Endothelial cell of umbilical vein (primary cell): ENCODE measurements at regions of chr1 and their contacts with region 1.

Region 1: DNA sequence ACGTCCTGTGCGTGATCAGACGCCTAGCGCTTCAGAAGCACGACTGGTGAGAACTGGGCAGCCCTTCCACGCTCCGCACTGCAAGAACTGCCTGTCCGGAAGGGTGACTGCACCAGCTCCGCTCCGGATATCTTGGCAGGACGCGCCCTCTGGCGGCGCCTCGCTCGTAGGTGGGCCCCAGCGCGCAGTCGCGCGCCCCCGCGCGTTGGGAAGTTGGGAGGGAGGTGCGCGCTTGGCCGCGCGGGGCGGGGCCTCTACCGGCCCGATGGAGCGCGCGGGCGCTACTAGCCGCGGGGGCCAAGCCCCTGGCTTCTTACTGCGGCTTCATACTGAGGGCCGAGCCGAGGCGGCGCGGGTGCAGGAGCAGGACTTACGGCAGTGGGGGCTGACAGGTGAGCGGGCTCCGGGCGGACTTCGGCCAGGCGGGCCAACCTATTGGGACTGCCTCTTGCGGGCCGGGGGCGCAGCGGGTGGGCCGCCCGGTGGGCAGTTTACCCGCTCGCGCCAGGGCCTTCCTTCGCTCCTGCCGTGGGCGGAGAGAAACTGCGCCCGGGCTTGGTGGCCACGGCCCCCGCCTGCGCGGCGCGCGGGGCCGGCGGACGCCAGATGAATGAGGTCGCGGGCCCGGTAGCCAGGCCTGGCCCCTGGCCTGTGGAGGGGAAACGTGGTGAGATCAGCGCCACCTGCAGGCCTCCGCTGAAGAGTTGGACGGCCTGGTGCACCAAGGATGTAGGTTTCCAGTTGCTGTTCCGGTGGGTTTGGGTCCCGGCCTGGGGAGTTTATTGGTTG is at the start of gene CHD1L:
- DNase-seq: peak; percentile 95
- H3K4me3 ChIP-seq: peak within 1 kb of the TSS; percentile 50 to 97 (median 90)
- H3K27ac ChIP-seq: peak within 1 kb of the TSS; percentile 50
- H3K4me1 ChIP-seq: peaks cover 7% of the 10 kb centered on the region
- H3K27me3 ChIP-seq: peaks cover 0 to 2% of the 10 kb centered on the region in 2 experiments
- CTCF ChIP-seq: peak; percentile 96
- POLR2A ChIP-seq: peak; percentile 66
- total RNA-seq, gene CHD1L: 33.8 and 38.3 TPM in 2 replicates

Region 2: DNA sequence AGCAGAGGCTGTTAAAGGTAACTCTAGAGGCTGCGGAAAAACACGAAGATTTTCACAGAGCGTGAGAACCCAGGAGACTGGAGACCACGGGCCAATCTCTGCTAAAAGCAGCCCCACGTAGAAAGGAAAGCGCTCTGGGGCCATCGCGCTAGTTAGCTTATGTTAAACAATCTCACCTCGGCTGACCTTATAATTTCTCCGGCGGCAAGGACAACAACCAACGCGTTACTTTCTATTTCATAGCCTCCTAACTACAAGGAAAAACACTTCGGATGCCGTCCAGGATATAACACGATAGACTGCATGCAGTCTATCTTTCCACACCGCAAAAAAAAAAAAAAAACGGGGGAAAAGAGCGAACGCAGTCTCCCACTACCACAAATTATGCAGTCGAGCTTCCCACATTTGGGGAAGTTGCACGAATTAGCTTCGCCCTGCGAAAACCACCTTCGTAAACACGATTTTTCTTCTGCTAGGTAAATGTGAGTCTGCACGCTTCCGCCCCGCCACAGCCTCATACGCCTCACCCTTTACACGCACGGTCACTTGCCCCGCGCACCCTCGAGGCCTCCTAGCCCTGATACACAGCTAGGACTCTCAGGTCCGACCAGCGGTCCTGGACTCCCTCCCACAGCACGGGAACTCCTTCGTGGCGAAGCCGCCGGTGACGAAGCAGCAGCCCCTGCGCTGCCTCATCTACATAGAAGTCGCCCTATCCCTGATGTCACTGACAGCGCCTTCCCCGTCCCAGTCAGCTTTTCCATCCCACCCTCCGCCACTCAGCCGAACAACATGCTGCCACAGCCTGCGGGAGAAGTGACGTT is 158.1 kb before region 1 on chr1:
- CTCF ChIA-PET with region 1: no interaction called
- POLR2A ChIA-PET with region 1: no interaction called
- dilution Hi-C with region 1: no loop called
- intact Hi-C with region 1: loop called (anchors 2 kb)
- DNase-seq: peak; percentile 75
- H3K4me3 ChIP-seq: peak overlapping the region; percentile 30 to 57 (median 45)
- H3K27ac ChIP-seq: peak overlapping the region; percentile 32
- H3K4me1 ChIP-seq: no peaks in the 10 kb centered on the region
- H3K27me3 ChIP-seq: peaks cover 41 to 55% of the 10 kb centered on the region in 2 experiments
- CTCF ChIP-seq: no peak
- POLR2A ChIP-seq: peak; percentile 100

Region 3: GRCh38 chr1:147093411-147093810 is 149.2 kb before region 1 on chr1:
- CTCF ChIA-PET with region 1: interaction called, 4 read pairs
- POLR2A ChIA-PET with region 1: no interaction called
- dilution Hi-C with region 1: no loop called
- intact Hi-C with region 1: loop called (anchors 1 kb)
- DNase-seq: no peak
- H3K4me3 ChIP-seq: no peak overlapping the region
- H3K27ac ChIP-seq: no peak overlapping the region
- H3K4me1 ChIP-seq: no peaks in the 10 kb centered on the region
- H3K27me3 ChIP-seq: peaks cover 5 to 12% of the 10 kb centered on the region in 2 experiments
- CTCF ChIP-seq: no peak
- POLR2A ChIP-seq: no peak

Region 4: DNA sequence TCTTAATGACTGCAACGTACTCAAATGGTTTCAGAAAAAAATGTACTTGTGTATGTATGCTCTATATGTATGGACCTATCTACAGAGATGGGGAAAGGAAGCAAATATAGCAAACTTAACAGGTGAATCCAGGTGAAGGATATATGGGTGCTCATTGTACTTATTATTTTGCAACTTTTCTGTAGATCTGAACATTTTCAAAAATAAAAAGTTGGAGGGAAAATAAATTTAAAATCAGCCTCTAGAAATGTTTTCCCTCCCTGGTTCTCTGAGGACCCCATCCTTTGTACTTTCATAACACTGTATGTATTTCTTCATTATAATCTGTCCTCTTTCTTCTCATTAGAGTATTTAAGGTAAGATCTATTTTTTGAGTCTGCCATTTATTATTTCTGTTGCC is 35.4 kb before region 1 on chr1:
- CTCF ChIA-PET with region 1: no interaction called
- POLR2A ChIA-PET with region 1: no interaction called
- dilution Hi-C with region 1: no loop called
- intact Hi-C with region 1: no loop called
- DNase-seq: no peak
- H3K4me3 ChIP-seq: no peak overlapping the region
- H3K27ac ChIP-seq: no peak overlapping the region
- H3K4me1 ChIP-seq: no peaks in the 10 kb centered on the region
- H3K27me3 ChIP-seq: no peaks in the 10 kb centered on the region
- CTCF ChIP-seq: no peak
- POLR2A ChIP-seq: no peak

Region 5: DNA sequence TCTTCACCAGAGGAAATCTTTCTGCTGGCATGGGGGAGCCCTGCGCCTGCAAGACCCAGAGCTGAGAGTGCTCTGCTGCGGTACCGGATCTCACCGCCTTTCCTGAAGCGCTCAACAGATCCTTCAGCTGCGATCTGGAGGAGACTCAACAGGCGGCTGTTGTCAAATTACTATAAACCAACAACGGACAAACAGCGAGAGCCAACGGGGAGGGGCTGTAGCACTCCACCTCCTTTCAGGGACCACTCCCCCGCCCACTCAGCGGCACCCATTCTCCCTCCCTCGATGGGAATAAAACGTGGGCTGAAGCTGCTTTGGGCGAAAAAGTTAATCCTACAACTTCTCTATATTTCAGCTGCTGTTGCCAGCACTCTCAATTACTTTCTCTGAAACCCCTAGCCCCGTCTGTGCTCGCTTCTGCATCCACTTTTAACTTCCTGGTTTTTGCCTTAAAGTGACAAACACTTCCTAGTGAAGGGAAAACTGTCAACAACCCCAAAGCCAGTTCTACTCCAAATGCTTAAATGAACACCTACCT is 17.4 kb before region 1 on chr1 and contains the start of gene FMO5:
- CTCF ChIA-PET with region 1: interaction called, 12 read pairs
- POLR2A ChIA-PET with region 1: no interaction called
- dilution Hi-C with region 1: no loop called
- intact Hi-C with region 1: loop called (anchors 1 kb)
- DNase-seq: peak; percentile 57
- H3K4me3 ChIP-seq: peak within 1 kb of the TSS; percentile 55 to 91 (median 60)
- H3K27ac ChIP-seq: no peak within 1 kb of the TSS
- H3K4me1 ChIP-seq: peaks cover 4% of the 10 kb centered on the region
- H3K27me3 ChIP-seq: peaks cover 2 to 4% of the 10 kb centered on the region in 2 experiments
- CTCF ChIP-seq: no peak
- POLR2A ChIP-seq: no peak
- total RNA-seq, gene FMO5: 0.60 and 1.3 TPM in 2 replicates

Region 6: GRCh38 chr1:147273409-147274336 is 31.0 kb after region 1 on chr1:
- CTCF ChIA-PET with region 1: interaction called, 15 read pairs
- POLR2A ChIA-PET with region 1: no interaction called
- dilution Hi-C with region 1: no loop called
- intact Hi-C with region 1: loop called (anchors 2 kb)
- DNase-seq: peak; percentile 77
- H3K4me3 ChIP-seq: no peak overlapping the region
- H3K27ac ChIP-seq: peak overlapping the region; percentile 48
- H3K4me1 ChIP-seq: peaks cover 14% of the 10 kb centered on the region
- H3K27me3 ChIP-seq: no peaks in the 10 kb centered on the region
- CTCF ChIP-seq: peak; percentile 28 to 35
- POLR2A ChIP-seq: no peak

Region 7: GRCh38 chr1:147504801-147505311 is 262.2 kb after region 1 on chr1:
- CTCF ChIA-PET with region 1: no interaction called
- POLR2A ChIA-PET with region 1: no interaction called
- dilution Hi-C with region 1: no loop called
- intact Hi-C with region 1: no loop called
- DNase-seq: no peak
- H3K4me3 ChIP-seq: no peak overlapping the region
- H3K27ac ChIP-seq: no peak overlapping the region
- H3K4me1 ChIP-seq: no peaks in the 10 kb centered on the region
- H3K27me3 ChIP-seq: peaks cover 3 to 16% of the 10 kb centered on the region in 2 experiments
- CTCF ChIP-seq: no peak
- POLR2A ChIP-seq: no peak